B cell (primary cell): ENCODE measurements at regions of chr9 and their contacts with region 1.

Region 1: DNA sequence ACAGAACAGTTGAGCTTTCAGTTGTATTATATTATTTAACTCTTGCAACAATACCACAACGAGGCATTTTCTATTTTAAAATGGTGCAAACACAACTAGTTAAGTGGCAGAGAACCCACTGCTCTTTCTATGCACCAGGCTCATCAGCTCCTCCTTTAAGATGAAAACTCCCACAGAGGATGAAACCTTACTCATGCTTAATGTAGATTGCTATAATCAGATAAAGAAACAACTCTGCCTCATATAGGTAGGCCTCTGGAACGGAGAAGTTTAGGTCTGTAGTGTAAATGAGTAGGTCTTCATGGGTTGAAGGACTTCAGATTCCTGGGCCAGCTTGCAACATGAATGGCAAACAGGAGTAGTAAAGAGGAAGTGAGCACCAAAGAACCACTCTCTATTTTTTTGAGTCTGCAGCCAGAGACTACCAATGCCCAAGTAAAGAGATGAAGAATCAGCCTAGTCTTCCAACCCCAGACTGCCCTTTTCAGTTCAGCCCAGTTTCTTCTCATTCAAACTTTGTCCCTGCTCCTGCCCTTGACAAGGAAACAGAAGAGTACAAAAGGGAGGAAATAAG is 33.9 kb downstream of the HACD4 start:
- DNase-seq: peak; percentile 29
- ATAC-seq: peak; percentile 36
- H3K4me3 ChIP-seq: no peak overlapping the region
- H3K4me3 Mint-ChIP-seq: no peak overlapping the region
- H3K27ac ChIP-seq: peak overlapping the region; percentile 23 to 51
- H3K27ac Mint-ChIP-seq: no peak overlapping the region
- H3K4me1 ChIP-seq: peaks cover 24 to 43% of the 10 kb centered on the region in 2 donors
- H3K4me1 Mint-ChIP-seq: peaks cover 31% of the 10 kb centered on the region
- H3K27me3 ChIP-seq: no peaks in the 10 kb centered on the region
- H3K27me3 Mint-ChIP-seq: no peaks in the 10 kb centered on the region
- CTCF ChIP-seq: no peak

Region 2: GRCh38 chr9:20507431-20507830 is 490.2 kb before region 1 on chr9:
- CTCF ChIA-PET with region 1: no interaction called
- POLR2A ChIA-PET with region 1: interaction called, 10 read pairs
- intact Hi-C with region 1: no loop called
- DNase-seq: no peak
- ATAC-seq: no peak
- H3K4me3 ChIP-seq: no peak overlapping the region
- H3K4me3 Mint-ChIP-seq: no peak overlapping the region
- H3K27ac ChIP-seq: no peak overlapping the region
- H3K27ac Mint-ChIP-seq: no peak overlapping the region
- H3K4me1 ChIP-seq: peaks cover 3 to 7% of the 10 kb centered on the region in 2 donors
- H3K4me1 Mint-ChIP-seq: peaks cover 9% of the 10 kb centered on the region
- H3K27me3 ChIP-seq: no peaks in the 10 kb centered on the region
- H3K27me3 Mint-ChIP-seq: no peaks in the 10 kb centered on the region
- CTCF ChIP-seq: no peak

Region 3: DNA sequence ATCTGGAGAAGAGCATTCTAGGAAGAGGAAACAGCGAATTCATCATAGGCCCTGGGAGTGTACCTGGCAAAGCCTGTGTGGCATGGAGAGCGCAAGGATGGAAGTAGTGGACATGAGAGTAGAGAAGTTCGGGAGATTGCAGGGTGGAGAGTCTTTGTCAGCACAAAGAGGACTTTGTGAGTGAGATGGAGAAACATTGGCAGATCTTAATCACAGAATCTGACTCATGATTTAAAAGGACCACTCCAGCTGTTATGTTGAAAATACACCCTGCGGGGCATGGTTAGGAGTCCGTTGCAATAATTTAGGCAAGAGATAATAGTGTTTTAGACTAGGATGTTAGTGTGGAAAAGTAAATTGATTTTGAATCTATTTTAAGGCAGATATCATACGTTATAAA is 83.0 kb before region 1 on chr9:
- CTCF ChIA-PET with region 1: no interaction called
- POLR2A ChIA-PET with region 1: no interaction called
- intact Hi-C with region 1: no loop called
- DNase-seq: no peak
- ATAC-seq: no peak
- H3K4me3 ChIP-seq: no peak overlapping the region
- H3K4me3 Mint-ChIP-seq: no peak overlapping the region
- H3K27ac ChIP-seq: no peak overlapping the region
- H3K27ac Mint-ChIP-seq: no peak overlapping the region
- H3K4me1 ChIP-seq: no peaks in the 10 kb centered on the region
- H3K4me1 Mint-ChIP-seq: no peaks in the 10 kb centered on the region
- H3K27me3 ChIP-seq: no peaks in the 10 kb centered on the region
- H3K27me3 Mint-ChIP-seq: no peaks in the 10 kb centered on the region
- CTCF ChIP-seq: no peak